Heart left ventricle (tissue), 16 donors: ENCODE measurements at regions of chr3 and their contacts with region 1.

Region 1: DNA sequence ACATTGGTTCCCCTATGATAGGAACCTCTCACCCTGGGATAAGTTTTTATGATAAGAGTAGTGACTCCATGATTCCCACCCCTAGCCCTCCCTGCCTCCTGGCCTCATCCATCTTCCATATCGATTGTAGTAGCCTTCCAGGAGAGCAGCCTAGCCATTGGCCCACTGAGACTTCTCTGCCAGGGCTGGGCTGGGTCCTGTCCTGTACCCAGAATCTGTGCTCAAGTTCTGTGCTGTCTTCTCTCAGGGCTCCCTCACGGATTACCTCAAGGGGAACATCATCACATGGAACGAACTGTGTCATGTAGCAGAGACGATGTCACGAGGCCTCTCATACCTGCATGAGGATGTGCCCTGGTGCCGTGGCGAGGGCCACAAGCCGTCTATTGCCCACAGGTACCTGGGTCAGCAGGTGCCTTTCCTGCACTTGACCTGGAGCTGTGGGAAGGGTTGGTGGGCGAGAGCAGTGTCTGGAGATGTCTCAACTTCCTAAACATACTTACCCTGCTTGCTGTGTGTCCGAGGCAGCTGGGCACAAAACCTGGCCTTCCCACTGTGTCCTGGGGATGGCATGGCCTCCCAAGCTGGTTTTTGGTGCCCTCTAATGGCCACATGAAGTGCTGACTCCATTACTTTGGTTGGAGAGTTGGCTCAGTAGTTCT is 16.6 kb upstream of the EXOG start:
- DNase-seq: peak; percentile 60 to 81 (median 61)
- ATAC-seq: peak; percentile 78 to 87 (median 82)
- H3K4me3 ChIP-seq: no peak overlapping the region
- H3K27ac ChIP-seq: no peak overlapping the region
- H3K4me1 ChIP-seq: peaks cover 0 to 3% (median 0%) of the 10 kb centered on the region in 12 donors
- H3K27me3 ChIP-seq: no peaks in the 10 kb centered on the region
- CTCF ChIP-seq: peak; percentile 84 to 95 (median 90)
- POLR2A ChIP-seq: no peak

Region 2: GRCh38 chr3:38117748-38118420 is 361.7 kb before region 1 on chr3:
- intact Hi-C with region 1: loop called in 8 of 10 experiments (anchors 5 to 10 kb)
- DNase-seq: peak in 3 of 5 donors; percentile 61 to 73 (median 69)
- ATAC-seq: peak; percentile 62 to 79 (median 72)
- H3K4me3 ChIP-seq: no peak overlapping the region
- H3K27ac ChIP-seq: no peak overlapping the region
- H3K4me1 ChIP-seq: peaks cover 0 to 12% (median 0%) of the 10 kb centered on the region in 12 donors
- H3K27me3 ChIP-seq: no peaks in the 10 kb centered on the region
- CTCF ChIP-seq: peak; percentile 47 to 79 (median 60)
- POLR2A ChIP-seq: no peak

Region 3: DNA sequence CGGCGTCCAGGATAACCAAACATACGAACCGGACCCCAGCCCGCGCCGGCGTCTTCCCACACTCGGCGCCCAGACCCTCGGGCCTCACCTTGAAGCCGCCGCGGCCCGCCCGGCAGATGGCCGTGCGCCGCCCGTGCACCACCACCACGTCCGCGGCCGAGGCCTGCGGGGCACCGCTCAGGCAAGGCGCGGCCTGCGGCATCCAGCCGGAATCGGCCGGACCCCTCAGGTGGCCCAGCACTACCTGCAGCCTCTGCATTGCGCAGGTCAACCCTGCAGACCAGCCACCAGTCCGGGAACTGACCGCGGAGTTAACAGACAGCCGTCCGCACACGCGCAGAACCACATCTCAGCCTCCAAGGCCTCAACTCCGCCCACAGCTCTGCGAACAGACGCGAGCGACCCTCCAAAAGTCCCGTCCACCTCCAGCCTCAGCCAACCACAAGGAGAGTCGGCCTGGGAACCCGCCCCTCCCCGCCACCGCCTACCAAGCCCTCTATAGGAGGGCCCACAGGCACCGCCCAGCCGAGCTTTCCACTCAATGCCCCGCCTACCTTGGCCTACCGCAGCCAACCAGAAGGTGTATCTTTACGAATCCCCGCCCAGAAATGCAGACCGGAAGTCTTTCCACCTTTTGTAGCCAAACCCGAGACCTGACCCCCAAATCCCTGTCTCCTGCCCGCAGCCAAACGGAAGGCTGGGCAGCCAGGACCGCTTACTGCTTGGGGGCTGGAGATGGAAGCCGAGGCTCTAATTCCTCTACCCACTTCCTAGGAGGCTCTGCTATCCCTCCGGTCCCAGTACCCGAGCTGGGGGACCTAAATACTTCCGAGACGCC is 342.6 kb before region 1 on chr3 and contains the start of gene ACAA1:
- intact Hi-C with region 1: loop called in 2 of 10 experiments (anchors 10 kb)
- DNase-seq: peak; percentile 100
- ATAC-seq: peak; percentile 97 to 100 (median 98)
- H3K4me3 ChIP-seq: peak within 1 kb of the TSS; percentile 70 to 99 (median 94)
- H3K27ac ChIP-seq: peak within 1 kb of the TSS; percentile 90 to 99 (median 94)
- H3K4me1 ChIP-seq: peaks cover 0 to 70% (median 35%) of the 10 kb centered on the region in 12 donors
- H3K27me3 ChIP-seq: no peaks in the 10 kb centered on the region
- CTCF ChIP-seq: peak in 1 of 12 donors; percentile 10
- POLR2A ChIP-seq: peak; percentile 60 to 88
- total RNA-seq, gene ACAA1: 84.4 to 139 (median 105) TPM

Region 4: GRCh38 chr3:38346587-38347410 is 132.8 kb before region 1 on chr3 and contains the start of gene XYLB:
- intact Hi-C with region 1: loop called (anchors 1 to 5 kb)
- DNase-seq: peak; percentile 86 to 94 (median 89)
- ATAC-seq: peak; percentile 92 to 100 (median 99)
- H3K4me3 ChIP-seq: peak within 1 kb of the TSS; percentile 44 to 93 (median 65)
- H3K27ac ChIP-seq: peak within 1 kb of the TSS in 5 of 12 donors; percentile 20 to 44 (median 25)
- H3K4me1 ChIP-seq: peaks cover 0 to 29% (median 3%) of the 10 kb centered on the region in 12 donors
- H3K27me3 ChIP-seq: no peaks in the 10 kb centered on the region
- CTCF ChIP-seq: peak; percentile 77 to 94 (median 88)
- POLR2A ChIP-seq: peak in 1 of 2 donors; percentile 29
- total RNA-seq, gene XYLB: 0.35 to 2.9 (median 1.3) TPM

Region 5: GRCh38 chr3:38365469-38366062 is 114.0 kb before region 1 on chr3:
- intact Hi-C with region 1: no loop called
- DNase-seq: no peak
- ATAC-seq: no peak
- H3K4me3 ChIP-seq: no peak overlapping the region
- H3K27ac ChIP-seq: no peak overlapping the region
- H3K4me1 ChIP-seq: no peaks in the 10 kb centered on the region
- H3K27me3 ChIP-seq: no peaks in the 10 kb centered on the region
- CTCF ChIP-seq: no peak
- POLR2A ChIP-seq: no peak